ENCODE measurements at regions of chr20 and their contacts with region 1.

Region 1: GRCh38 chr20:60057123-60057801 is 99.0 kb downstream of the CDH26 start:
- DNase-seq: peak; percentile 42 to 83 (median 65)
- ATAC-seq: peak; percentile 47
- H3K4me3 ChIP-seq: peak overlapping the region in 1 of 2 experiments; percentile 55
- H3K4me3 Mint-ChIP-seq: peak overlapping the region; percentile 13
- H3K27ac ChIP-seq: peak overlapping the region in 1 of 2 experiments; percentile 78
- H3K27ac Mint-ChIP-seq: peak overlapping the region; percentile 50
- H3K4me1 ChIP-seq: peaks cover 46% of the 10 kb centered on the region
- H3K4me1 Mint-ChIP-seq: peaks cover 46% of the 10 kb centered on the region
- H3K27me3 ChIP-seq: no peaks in the 10 kb centered on the region
- H3K27me3 Mint-ChIP-seq: no peaks in the 10 kb centered on the region
- CTCF ChIP-seq: peak; percentile 81

Region 2: GRCh38 chr20:59850018-59850641 is 207.1 kb before region 1 on chr20:
- CTCF ChIA-PET with region 1: no interaction called
- POLR2A ChIA-PET with region 1: no interaction called
- intact Hi-C with region 1: no loop called
- DNase-seq: peak in 2 of 9 experiments; percentile 7 to 20
- ATAC-seq: no peak
- H3K4me3 ChIP-seq: no peak overlapping the region
- H3K4me3 Mint-ChIP-seq: no peak overlapping the region
- H3K27ac ChIP-seq: no peak overlapping the region
- H3K27ac Mint-ChIP-seq: no peak overlapping the region
- H3K4me1 ChIP-seq: no peaks in the 10 kb centered on the region
- H3K4me1 Mint-ChIP-seq: no peaks in the 10 kb centered on the region
- H3K27me3 ChIP-seq: no peaks in the 10 kb centered on the region
- H3K27me3 Mint-ChIP-seq: peaks cover 2% of the 10 kb centered on the region
- CTCF ChIP-seq: peak; percentile 62

Region 3: DNA sequence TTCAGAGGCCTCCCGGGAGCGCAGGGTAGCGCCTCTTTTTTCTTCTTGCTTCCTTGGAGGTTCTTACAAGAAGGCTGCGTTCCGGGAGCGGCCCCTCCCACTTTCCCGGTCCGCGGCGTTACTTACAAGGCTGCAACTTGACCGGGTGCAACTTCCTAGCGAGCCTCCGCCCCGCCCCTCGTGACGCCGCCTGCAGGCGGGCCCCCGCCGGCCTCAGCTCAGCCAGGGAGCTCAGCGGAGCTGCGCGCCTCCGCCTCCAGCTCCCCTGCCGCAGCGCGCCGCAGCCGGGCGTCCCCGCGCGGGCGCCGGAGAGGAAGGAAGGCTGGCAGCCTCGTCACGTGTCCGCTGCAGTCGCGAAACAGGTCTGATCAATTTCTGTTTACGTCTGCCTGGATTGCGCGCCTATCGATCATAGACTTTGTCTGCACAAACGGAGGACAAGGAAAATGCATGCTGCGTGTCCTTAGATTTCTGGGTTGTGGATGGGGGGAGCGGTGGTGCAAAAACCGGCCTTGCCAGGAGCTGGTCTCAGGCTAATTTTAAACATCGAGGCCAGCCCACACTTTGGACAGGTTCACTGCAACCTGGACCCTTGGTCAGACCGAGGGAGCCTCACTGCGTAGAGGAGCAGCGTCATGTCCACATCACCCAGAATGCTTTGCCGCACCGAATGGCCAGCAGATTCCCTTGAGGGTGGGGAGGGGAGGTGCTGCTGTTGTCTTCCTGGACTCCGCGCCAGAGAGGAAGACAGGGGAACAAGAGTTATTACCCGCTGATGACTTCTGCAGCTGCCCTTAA is 116.9 kb before region 1 on chr20 and contains the starts of genes FAM217B and PPP1R3D:
- CTCF ChIA-PET with region 1: interaction called, 8 read pairs
- POLR2A ChIA-PET with region 1: interaction called, 3 read pairs
- intact Hi-C with region 1: loop called (anchors 5 kb)
- DNase-seq: peak; percentile 74 to 94 (median 88)
- ATAC-seq: peak; percentile 96
- H3K4me3 ChIP-seq: peak within 1 kb of the TSS; percentile 94 to 97
- H3K4me3 Mint-ChIP-seq: peak within 1 kb of the TSS; percentile 96
- H3K27ac ChIP-seq: peak within 1 kb of the TSS; percentile 90 to 91
- H3K27ac Mint-ChIP-seq: peak within 1 kb of the TSS; percentile 96
- H3K4me1 ChIP-seq: peaks cover 22% of the 10 kb centered on the region
- H3K4me1 Mint-ChIP-seq: peaks cover 45% of the 10 kb centered on the region
- H3K27me3 ChIP-seq: no peaks in the 10 kb centered on the region
- H3K27me3 Mint-ChIP-seq: no peaks in the 10 kb centered on the region
- CTCF ChIP-seq: no peak
- total RNA-seq, gene FAM217B: 10.1 to 13.5 TPM
- total RNA-seq, gene PPP1R3D: 3.9 to 4.5 TPM

Region 4: DNA sequence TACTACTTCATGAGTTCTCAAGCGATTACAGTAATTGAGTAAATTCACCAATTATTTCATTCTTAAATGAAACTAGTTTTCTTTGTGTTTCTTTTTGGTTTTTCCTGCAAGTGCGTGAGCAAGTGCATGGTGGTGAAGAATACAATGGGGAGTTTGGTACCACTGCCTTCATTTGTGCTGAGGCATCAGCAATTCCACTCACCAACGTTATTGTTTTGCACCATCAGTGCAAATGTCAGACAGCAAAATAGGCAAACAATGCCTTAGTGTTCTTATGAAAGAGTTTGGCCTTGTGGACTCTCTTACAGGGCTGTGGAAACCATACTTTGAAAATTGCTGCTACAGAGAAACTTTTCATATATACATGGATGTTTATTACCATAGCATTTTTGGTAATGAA is 90.8 kb before region 1 on chr20:
- CTCF ChIA-PET with region 1: no interaction called
- POLR2A ChIA-PET with region 1: no interaction called
- intact Hi-C with region 1: no loop called
- DNase-seq: no peak
- ATAC-seq: no peak
- H3K4me3 ChIP-seq: no peak overlapping the region
- H3K4me3 Mint-ChIP-seq: no peak overlapping the region
- H3K27ac ChIP-seq: no peak overlapping the region
- H3K27ac Mint-ChIP-seq: no peak overlapping the region
- H3K4me1 ChIP-seq: no peaks in the 10 kb centered on the region
- H3K4me1 Mint-ChIP-seq: no peaks in the 10 kb centered on the region
- H3K27me3 ChIP-seq: no peaks in the 10 kb centered on the region
- H3K27me3 Mint-ChIP-seq: no peaks in the 10 kb centered on the region
- CTCF ChIP-seq: no peak

Region 5: GRCh38 chr20:59984541-59984940 is 72.7 kb before region 1 on chr20:
- CTCF ChIA-PET with region 1: no interaction called
- POLR2A ChIA-PET with region 1: no interaction called
- intact Hi-C with region 1: no loop called
- DNase-seq: no peak
- ATAC-seq: no peak
- H3K4me3 ChIP-seq: no peak overlapping the region
- H3K4me3 Mint-ChIP-seq: no peak overlapping the region
- H3K27ac ChIP-seq: no peak overlapping the region
- H3K27ac Mint-ChIP-seq: no peak overlapping the region
- H3K4me1 ChIP-seq: no peaks in the 10 kb centered on the region
- H3K4me1 Mint-ChIP-seq: no peaks in the 10 kb centered on the region
- H3K27me3 ChIP-seq: no peaks in the 10 kb centered on the region
- H3K27me3 Mint-ChIP-seq: no peaks in the 10 kb centered on the region
- CTCF ChIP-seq: no peak

Region 6: DNA sequence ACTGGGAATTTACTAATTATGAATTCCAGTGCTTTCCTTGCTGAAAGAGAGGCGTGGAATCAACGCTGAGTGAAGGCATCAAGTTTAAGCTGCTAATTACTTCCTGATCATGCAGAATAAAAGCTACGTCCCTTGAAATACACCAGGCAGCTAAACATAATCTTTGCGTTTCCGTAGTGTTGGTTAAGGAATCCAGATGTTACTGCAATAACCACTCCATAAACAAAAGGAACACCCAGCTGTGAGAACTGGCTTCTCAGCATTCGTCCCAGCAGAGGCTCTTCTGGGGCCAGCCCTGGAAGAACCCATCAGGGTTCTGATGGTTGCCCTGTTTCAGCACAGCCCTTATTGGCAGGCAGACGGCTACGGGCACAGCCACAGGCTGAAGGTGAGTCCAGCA is 12.4 kb after region 1 on chr20:
- CTCF ChIA-PET with region 1: interaction called, 13 read pairs
- POLR2A ChIA-PET with region 1: no interaction called
- intact Hi-C with region 1: no loop called
- DNase-seq: no peak
- ATAC-seq: no peak
- H3K4me3 ChIP-seq: no peak overlapping the region
- H3K4me3 Mint-ChIP-seq: no peak overlapping the region
- H3K27ac ChIP-seq: no peak overlapping the region
- H3K27ac Mint-ChIP-seq: no peak overlapping the region
- H3K4me1 ChIP-seq: no peaks in the 10 kb centered on the region
- H3K4me1 Mint-ChIP-seq: peaks cover 4% of the 10 kb centered on the region
- H3K27me3 ChIP-seq: no peaks in the 10 kb centered on the region
- H3K27me3 Mint-ChIP-seq: no peaks in the 10 kb centered on the region
- CTCF ChIP-seq: no peak

Region 7: GRCh38 chr20:61120595-61121515 is 1063.6 kb after region 1 on chr20:
- CTCF ChIA-PET with region 1: no interaction called
- POLR2A ChIA-PET with region 1: no interaction called
- intact Hi-C with region 1: loop called in 1 of 2 experiments (anchors 2 kb)
- DNase-seq: peak in 5 of 9 experiments; percentile 8 to 59 (median 26)
- ATAC-seq: peak; percentile 31
- H3K4me3 ChIP-seq: no peak overlapping the region
- H3K4me3 Mint-ChIP-seq: no peak overlapping the region
- H3K27ac ChIP-seq: no peak overlapping the region
- H3K27ac Mint-ChIP-seq: no peak overlapping the region
- H3K4me1 ChIP-seq: no peaks in the 10 kb centered on the region
- H3K4me1 Mint-ChIP-seq: peaks cover 3% of the 10 kb centered on the region
- H3K27me3 ChIP-seq: no peaks in the 10 kb centered on the region
- H3K27me3 Mint-ChIP-seq: peaks cover 2% of the 10 kb centered on the region
- CTCF ChIP-seq: no peak

Region 8: DNA sequence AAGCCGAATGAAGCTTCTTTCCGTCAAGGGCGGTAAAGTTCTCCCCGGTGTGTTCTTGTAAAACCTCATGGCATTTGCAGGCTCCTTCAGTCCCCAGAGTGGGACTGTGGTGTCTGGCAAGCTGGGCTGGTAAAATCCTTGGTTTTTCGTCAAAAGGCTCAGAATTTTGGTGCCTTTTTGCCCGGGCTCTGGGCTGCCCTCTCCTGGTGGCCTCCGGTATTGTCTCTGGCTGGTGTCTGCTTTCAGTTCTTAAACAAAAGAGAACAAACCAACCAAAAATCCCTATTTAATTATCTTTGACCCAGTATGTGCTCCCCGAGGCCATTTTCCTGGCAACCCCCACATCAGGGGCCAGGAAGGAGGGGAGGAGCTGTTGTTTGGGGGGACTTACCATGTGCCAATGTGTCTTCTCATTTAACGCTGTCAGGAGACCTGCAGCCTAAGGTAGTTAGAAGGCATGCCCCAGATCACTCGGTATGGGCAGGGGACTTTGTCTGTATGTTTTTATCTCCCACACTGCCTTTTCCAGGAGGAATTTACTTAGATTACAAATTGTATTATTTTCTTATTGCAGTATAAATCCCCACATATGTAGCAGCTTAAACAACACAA is 1205.9 kb after region 1 on chr20:
- CTCF ChIA-PET with region 1: interaction called, 3 read pairs
- POLR2A ChIA-PET with region 1: no interaction called
- intact Hi-C with region 1: loop called in 1 of 2 experiments (anchors 2 kb)
- DNase-seq: peak in 6 of 9 experiments; percentile 10 to 51 (median 14)
- ATAC-seq: no peak
- H3K4me3 ChIP-seq: no peak overlapping the region
- H3K4me3 Mint-ChIP-seq: no peak overlapping the region
- H3K27ac ChIP-seq: no peak overlapping the region
- H3K27ac Mint-ChIP-seq: no peak overlapping the region
- H3K4me1 ChIP-seq: no peaks in the 10 kb centered on the region
- H3K4me1 Mint-ChIP-seq: no peaks in the 10 kb centered on the region
- H3K27me3 ChIP-seq: no peaks in the 10 kb centered on the region
- H3K27me3 Mint-ChIP-seq: peaks cover 17% of the 10 kb centered on the region
- CTCF ChIP-seq: peak; percentile 54

Measured in CD8-positive, alpha-beta T cell (primary cell).